ENCODE measurements at regions of chr1 and their contacts with region 1.

Region 1: DNA sequence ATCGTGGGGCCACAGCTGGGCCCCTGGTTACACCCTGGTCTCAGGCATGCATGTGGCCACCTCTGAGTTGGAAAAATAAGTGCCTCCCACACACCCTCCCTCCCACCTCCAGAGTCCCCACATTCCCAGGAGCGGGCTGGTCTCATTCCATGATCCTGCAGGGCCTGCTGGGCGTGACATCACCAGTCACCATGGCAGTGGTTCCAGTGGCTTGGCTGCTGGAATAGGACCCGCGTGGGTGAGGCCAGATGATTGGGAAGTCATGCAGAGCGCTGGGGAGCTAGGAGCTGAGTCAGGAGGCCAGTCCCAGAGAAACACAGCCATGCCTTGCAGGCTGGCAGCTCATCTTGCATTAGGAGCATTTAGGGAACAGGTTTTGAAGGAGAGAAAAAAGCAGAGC is 125.4 kb upstream of the TMEM51 start:
- DNase-seq: no peak
- H3K4me3 ChIP-seq: no peak overlapping the region
- H3K27ac ChIP-seq: no peak overlapping the region
- H3K4me1 ChIP-seq: peaks cover 0 to 17% (median 12%) of the 10 kb centered on the region in 4 experiments; a peak in 6 of 7 replicates
- H3K27me3 ChIP-seq: no peaks in the 10 kb centered on the region
- CTCF ChIP-seq: no peak
- EP300 ChIP-seq: no peak
- POLR2A ChIP-seq: no peak
- RAD21 ChIP-seq: no peak

Region 2: GRCh38 chr1:14804626-14805025 is 223.5 kb before region 1 on chr1:
- CTCF ChIA-PET with region 1: interaction called, 13 read pairs
- POLR2A ChIA-PET with region 1: interaction called, 3 read pairs
- DNase-seq: peak; percentile 19 to 64
- H3K4me3 ChIP-seq: no peak overlapping the region
- H3K27ac ChIP-seq: no peak overlapping the region
- H3K4me1 ChIP-seq: no peaks in the 10 kb centered on the region
- H3K27me3 ChIP-seq: no peaks in the 10 kb centered on the region
- CTCF ChIP-seq: peak; percentile 70 to 82 (median 80)
- EP300 ChIP-seq: no peak
- POLR2A ChIP-seq: no peak
- RAD21 ChIP-seq: peak; percentile 72 to 81

Region 3: DNA sequence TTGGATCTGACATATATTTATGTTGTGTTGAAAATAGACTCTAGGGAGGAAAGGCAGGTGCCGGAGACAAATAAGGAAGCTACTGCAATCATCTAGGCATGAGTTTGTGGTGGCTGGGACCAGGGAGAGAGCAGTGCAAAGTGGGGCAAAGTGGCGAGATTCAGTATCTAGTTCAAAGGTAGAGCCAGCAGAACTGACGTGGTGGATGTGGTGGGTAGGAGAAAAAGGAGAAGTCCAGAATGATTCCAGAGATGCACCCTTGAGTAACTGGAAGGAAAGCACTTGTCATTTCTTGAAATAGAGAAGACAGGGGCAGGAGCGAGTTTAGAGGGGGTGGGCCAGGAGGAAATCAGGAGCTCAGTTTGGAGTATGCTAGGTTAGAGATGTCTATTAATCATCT is 154.4 kb before region 1 on chr1:
- CTCF ChIA-PET with region 1: no interaction called
- POLR2A ChIA-PET with region 1: no interaction called
- DNase-seq: no peak
- H3K4me3 ChIP-seq: no peak overlapping the region
- H3K27ac ChIP-seq: no peak overlapping the region
- H3K4me1 ChIP-seq: peaks cover 0 to 10% (median 7%) of the 10 kb centered on the region in 4 experiments; a peak in 5 of 7 replicates
- H3K27me3 ChIP-seq: no peaks in the 10 kb centered on the region
- CTCF ChIP-seq: no peak
- EP300 ChIP-seq: no peak
- POLR2A ChIP-seq: no peak
- RAD21 ChIP-seq: no peak

Region 4: GRCh38 chr1:14915356-14916054 is 112.6 kb before region 1 on chr1:
- CTCF ChIA-PET with region 1: interaction called, 19 read pairs
- POLR2A ChIA-PET with region 1: no interaction called
- DNase-seq: peak in 1 of 2 experiments; percentile 89
- H3K4me3 ChIP-seq: no peak overlapping the region; a peak in 1 of 8 replicates
- H3K27ac ChIP-seq: no peak overlapping the region
- H3K4me1 ChIP-seq: peaks cover 2 to 6% (median 4%) of the 10 kb centered on the region in 4 experiments; a peak in 6 of 7 replicates
- H3K27me3 ChIP-seq: no peaks in the 10 kb centered on the region; a peak in 1 of 7 replicates
- CTCF ChIP-seq: peak; percentile 73 to 93 (median 89)
- EP300 ChIP-seq: no peak
- POLR2A ChIP-seq: no peak
- RAD21 ChIP-seq: peak; percentile 61 to 75

Region 5: GRCh38 chr1:14987829-14988603 is 40.1 kb before region 1 on chr1:
- CTCF ChIA-PET with region 1: interaction called, 12 read pairs
- POLR2A ChIA-PET with region 1: no interaction called
- DNase-seq: no peak
- H3K4me3 ChIP-seq: no peak overlapping the region
- H3K27ac ChIP-seq: no peak overlapping the region
- H3K4me1 ChIP-seq: peaks cover 0 to 3% (median 1%) of the 10 kb centered on the region in 4 experiments; a peak in 3 of 7 replicates
- H3K27me3 ChIP-seq: no peaks in the 10 kb centered on the region
- CTCF ChIP-seq: no peak
- EP300 ChIP-seq: no peak
- POLR2A ChIP-seq: no peak
- RAD21 ChIP-seq: no peak

Region 6: GRCh38 chr1:15008783-15009729 is 19.0 kb before region 1 on chr1:
- CTCF ChIA-PET with region 1: interaction called, 45 read pairs
- POLR2A ChIA-PET with region 1: no interaction called
- DNase-seq: no peak
- H3K4me3 ChIP-seq: no peak overlapping the region
- H3K27ac ChIP-seq: no peak overlapping the region
- H3K4me1 ChIP-seq: peaks cover 0 to 8% (median 2%) of the 10 kb centered on the region in 4 experiments; a peak in 6 of 7 replicates
- H3K27me3 ChIP-seq: no peaks in the 10 kb centered on the region
- CTCF ChIP-seq: no peak
- EP300 ChIP-seq: no peak
- POLR2A ChIP-seq: no peak
- RAD21 ChIP-seq: no peak

Region 7: GRCh38 chr1:15038232-15039016 is 10.3 kb after region 1 on chr1:
- CTCF ChIA-PET with region 1: interaction called, 32 read pairs
- POLR2A ChIA-PET with region 1: no interaction called
- DNase-seq: no peak
- H3K4me3 ChIP-seq: no peak overlapping the region
- H3K27ac ChIP-seq: no peak overlapping the region
- H3K4me1 ChIP-seq: no peaks in the 10 kb centered on the region
- H3K27me3 ChIP-seq: no peaks in the 10 kb centered on the region
- CTCF ChIP-seq: peak; percentile 51 to 75 (median 65)
- EP300 ChIP-seq: no peak
- POLR2A ChIP-seq: no peak
- RAD21 ChIP-seq: peak; percentile 53 to 57

Region 8: DNA sequence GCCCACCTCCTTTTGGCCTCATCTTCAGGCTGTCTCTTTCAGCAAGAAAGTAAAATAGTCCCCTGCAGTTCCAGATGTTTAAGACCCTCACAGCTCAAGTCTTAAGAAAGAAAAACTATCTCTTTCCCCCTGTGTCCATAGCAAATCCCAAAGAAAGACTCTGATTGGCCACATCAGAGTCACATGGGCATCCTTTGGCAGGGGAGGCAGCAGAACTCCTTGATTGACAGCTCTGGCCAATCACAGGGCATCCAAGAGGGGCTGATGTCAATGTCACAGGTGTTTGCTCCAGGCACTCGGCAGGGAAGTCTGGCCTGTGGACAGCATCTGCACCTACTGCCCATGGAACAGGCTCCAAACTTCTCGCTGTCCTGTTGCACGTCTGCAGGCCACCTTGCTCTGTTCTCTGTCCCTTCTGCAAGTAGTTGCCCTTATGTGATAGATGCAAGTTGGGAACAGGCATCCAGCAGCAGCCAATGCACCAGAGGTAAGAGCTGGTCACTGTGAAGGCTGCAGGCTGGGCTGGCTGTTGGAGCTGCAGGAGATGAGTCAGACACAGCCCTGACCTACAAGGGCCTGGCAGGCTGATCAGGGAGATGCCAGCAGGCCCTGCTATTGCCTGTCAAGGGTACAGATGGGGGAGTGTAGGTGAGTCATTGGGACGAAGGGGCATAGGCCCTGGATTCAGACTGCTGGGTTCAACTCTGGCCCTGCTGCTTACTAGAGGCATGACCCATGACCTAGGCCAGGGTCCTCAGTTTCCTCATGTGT is 28.6 kb after region 1 on chr1:
- CTCF ChIA-PET with region 1: interaction called, 17 read pairs
- POLR2A ChIA-PET with region 1: no interaction called
- DNase-seq: no peak
- H3K4me3 ChIP-seq: no peak overlapping the region
- H3K27ac ChIP-seq: no peak overlapping the region
- H3K4me1 ChIP-seq: peaks cover 0 to 14% (median 10%) of the 10 kb centered on the region in 4 experiments; a peak in 6 of 7 replicates
- H3K27me3 ChIP-seq: no peaks in the 10 kb centered on the region
- CTCF ChIP-seq: no peak
- EP300 ChIP-seq: no peak
- POLR2A ChIP-seq: no peak
- RAD21 ChIP-seq: no peak

Region 9: DNA sequence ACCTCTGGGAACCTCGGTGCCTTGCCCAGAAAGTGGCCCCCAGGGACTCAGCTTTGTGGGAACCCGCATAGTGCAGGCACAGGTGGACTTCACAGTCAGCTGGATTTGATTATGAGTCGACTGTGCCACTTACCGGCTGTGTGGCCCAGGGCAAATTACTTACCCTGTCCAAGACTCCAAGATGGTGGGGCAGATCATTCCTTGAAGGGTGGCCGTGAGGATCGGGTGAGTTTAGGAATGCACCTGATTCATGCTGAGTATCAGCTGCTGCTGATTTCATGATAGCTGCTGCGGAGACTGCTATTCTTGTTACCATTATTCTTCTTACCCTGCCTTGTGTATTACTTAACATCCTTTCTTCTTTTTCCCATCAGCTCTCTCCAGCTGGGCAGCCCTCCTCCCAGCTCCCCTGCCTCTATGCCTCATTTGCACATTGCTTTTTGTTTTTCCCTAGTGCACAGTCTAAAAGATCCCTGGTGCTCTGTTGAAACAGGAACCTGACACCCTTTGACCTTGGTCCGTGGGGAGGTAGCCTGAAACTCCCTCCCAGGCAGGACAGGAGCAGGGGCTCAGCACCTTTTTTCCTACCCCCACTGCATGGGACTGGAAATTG is 178.4 kb after region 1 on chr1:
- CTCF ChIA-PET with region 1: no interaction called
- POLR2A ChIA-PET with region 1: no interaction called
- DNase-seq: no peak
- H3K4me3 ChIP-seq: peak overlapping the region; percentile 22 to 48 (median 32); a peak in 6 of 8 replicates
- H3K27ac ChIP-seq: peak overlapping the region; percentile 75
- H3K4me1 ChIP-seq: peaks cover 15 to 30% (median 26%) of the 10 kb centered on the region in 4 experiments
- H3K27me3 ChIP-seq: no peaks in the 10 kb centered on the region
- CTCF ChIP-seq: no peak
- EP300 ChIP-seq: no peak
- POLR2A ChIP-seq: no peak
- RAD21 ChIP-seq: no peak

Measured in H1 (cell line).